SK-N-SH (cell line): ENCODE measurements at regions of chrX and their contacts with region 1.

Region 1: GRCh38 chrX:74536152-74536831 is 78.1 kb downstream of the RLIM start:
- DNase-seq: peak; percentile 86
- H3K4me3 ChIP-seq: peak overlapping the region; percentile 51 to 57
- H3K27ac ChIP-seq: peak overlapping the region; percentile 38 to 72; a peak in 3 of 4 replicates
- H3K4me1 ChIP-seq: peaks cover 0 to 5% of the 10 kb centered on the region in 2 experiments; a peak in 1 of 4 replicates
- H3K27me3 ChIP-seq: peaks cover 14% of the 10 kb centered on the region; the same call in 1 of the 2 replicates
- CTCF ChIP-seq: peak; percentile 48
- EP300 ChIP-seq: no peak
- RAD21 ChIP-seq: no peak

Region 2: GRCh38 chrX:74382613-74383012 is 153.7 kb before region 1 on chrX:
- CTCF ChIA-PET with region 1: interaction called, 23 read pairs
- POLR2A ChIA-PET with region 1: no interaction called
- DNase-seq: peak; percentile 62
- H3K4me3 ChIP-seq: no peak overlapping the region
- H3K27ac ChIP-seq: no peak overlapping the region
- H3K4me1 ChIP-seq: no peaks in the 10 kb centered on the region
- H3K27me3 ChIP-seq: no peaks in the 10 kb centered on the region; the same call in 1 of the 2 replicates
- CTCF ChIP-seq: peak; percentile 80
- EP300 ChIP-seq: no peak
- RAD21 ChIP-seq: peak; percentile 60

Region 3: GRCh38 chrX:74421036-74421739 is 115.1 kb before region 1 on chrX and contains the start of gene SLC16A2:
- CTCF ChIA-PET with region 1: interaction called, 16 read pairs
- POLR2A ChIA-PET with region 1: interaction called, 5 read pairs
- DNase-seq: peak; percentile 86
- H3K4me3 ChIP-seq: peak within 1 kb of the TSS; percentile 56 to 62
- H3K27ac ChIP-seq: peak within 1 kb of the TSS; percentile 82 to 84
- H3K4me1 ChIP-seq: peaks cover 0 to 10% of the 10 kb centered on the region in 2 experiments; a peak in 1 of 4 replicates
- H3K27me3 ChIP-seq: peaks cover 14% of the 10 kb centered on the region; the same call in 1 of the 2 replicates
- CTCF ChIP-seq: no peak
- EP300 ChIP-seq: no peak
- RAD21 ChIP-seq: no peak
- polyA plus RNA-seq, gene SLC16A2: 10.9 and 13.1 TPM in 2 replicates

Region 4: DNA sequence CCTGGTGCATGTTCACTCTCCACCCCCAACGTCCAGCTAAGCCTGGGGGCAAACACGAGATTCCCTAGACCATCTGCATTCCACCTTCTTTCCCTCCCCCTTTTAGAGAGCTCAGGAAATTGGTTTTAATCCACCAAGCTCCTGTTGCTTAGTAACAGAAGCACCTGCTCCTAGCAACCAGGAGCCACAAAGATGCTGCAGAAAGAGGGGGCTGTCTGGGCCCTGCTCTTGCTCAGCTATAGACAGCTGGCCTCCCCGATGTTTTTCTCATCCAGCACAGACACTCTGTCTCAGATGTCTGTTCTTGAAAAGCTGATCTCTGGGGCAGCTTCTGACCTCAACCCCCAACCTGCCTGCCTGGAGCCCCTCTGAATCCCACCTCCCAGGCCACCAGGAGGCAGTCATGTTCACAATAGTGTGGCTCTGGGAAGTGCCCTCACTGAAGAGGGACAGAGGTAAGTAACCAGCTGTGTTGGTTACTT is 43.5 kb before region 1 on chrX:
- CTCF ChIA-PET with region 1: interaction called, 36 read pairs
- POLR2A ChIA-PET with region 1: no interaction called
- DNase-seq: peak; percentile 16
- H3K4me3 ChIP-seq: no peak overlapping the region
- H3K27ac ChIP-seq: no peak overlapping the region
- H3K4me1 ChIP-seq: peaks cover 0 to 8% of the 10 kb centered on the region in 2 experiments; a peak in 1 of 4 replicates
- H3K27me3 ChIP-seq: no peaks in the 10 kb centered on the region
- CTCF ChIP-seq: peak; percentile 23; the same call in 1 of the 2 replicates
- EP300 ChIP-seq: no peak
- RAD21 ChIP-seq: peak; percentile 55